ENCODE measurements at regions of chr9 and their contacts with region 1.

Region 1: DNA sequence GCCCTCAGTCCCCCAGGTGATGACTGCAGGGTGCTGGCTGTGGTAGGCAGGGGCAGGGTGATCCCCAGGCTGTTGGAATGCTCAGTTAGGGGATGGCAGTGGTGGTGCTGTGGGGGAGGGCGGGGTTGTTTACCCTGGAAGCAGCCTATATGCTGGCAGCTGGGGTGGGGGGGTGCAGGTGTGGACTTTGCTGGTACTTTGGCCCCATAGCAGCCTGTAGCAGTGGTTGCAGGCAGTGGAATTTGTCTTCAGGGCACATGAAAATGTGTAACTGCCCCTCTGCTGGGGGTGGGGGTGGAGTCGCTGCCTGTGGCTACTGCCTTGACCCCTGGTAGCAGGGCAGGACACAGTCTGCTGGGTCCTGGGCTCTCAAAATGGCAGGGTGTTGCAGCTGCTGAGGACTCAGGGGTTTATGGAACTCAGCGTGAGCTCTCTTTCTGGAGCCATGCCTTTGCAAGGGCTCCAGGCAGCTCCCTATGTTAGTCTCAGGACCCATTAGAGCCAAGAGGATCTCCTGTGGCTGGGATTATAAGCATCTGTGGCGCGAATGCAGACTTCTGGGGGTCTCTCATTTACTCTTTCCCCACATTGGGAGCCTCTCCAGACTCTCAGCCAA is 65.0 kb downstream of the RMI1 start:
- DNase-seq: no peak
- H3K4me3 ChIP-seq: no peak overlapping the region
- H3K27ac ChIP-seq: no peak overlapping the region
- H3K4me1 ChIP-seq: no peaks in the 10 kb centered on the region
- H3K27me3 ChIP-seq: no peaks in the 10 kb centered on the region
- CTCF ChIP-seq: no peak
- POLR2A ChIP-seq: no peak

Region 2: GRCh38 chr9:83688921-83689320 is 356.7 kb before region 1 on chr9:
- intact Hi-C with region 1: no loop called
- DNase-seq: no peak
- H3K4me3 ChIP-seq: no peak overlapping the region
- H3K27ac ChIP-seq: no peak overlapping the region
- H3K4me1 ChIP-seq: no peaks in the 10 kb centered on the region
- H3K27me3 ChIP-seq: no peaks in the 10 kb centered on the region
- CTCF ChIP-seq: no peak
- POLR2A ChIP-seq: no peak

Region 3: DNA sequence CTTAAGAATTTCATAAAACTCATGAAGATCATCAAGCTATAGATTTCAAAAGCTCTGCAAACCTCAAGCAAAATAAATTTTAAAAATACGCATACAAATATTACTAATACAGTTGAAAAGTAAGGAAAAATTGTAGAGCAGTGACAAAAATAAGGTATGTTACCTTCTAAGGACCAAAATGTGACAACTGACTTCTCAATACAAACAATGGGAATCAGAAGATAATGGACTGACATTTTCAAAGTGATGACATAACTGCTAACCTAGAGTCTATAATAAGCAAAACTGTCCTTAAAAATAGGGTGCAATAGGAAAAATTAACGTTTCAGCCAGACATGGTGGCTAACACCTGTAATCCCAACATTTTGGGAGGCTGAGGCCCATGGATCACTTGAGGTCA is 37.9 kb before region 1 on chr9:
- intact Hi-C with region 1: loop called (anchors 5 kb)
- DNase-seq: no peak
- H3K4me3 ChIP-seq: no peak overlapping the region
- H3K27ac ChIP-seq: no peak overlapping the region
- H3K4me1 ChIP-seq: no peaks in the 10 kb centered on the region
- H3K27me3 ChIP-seq: no peaks in the 10 kb centered on the region
- CTCF ChIP-seq: no peak
- POLR2A ChIP-seq: no peak

Region 4: GRCh38 chr9:84111726-84112125 is 66.1 kb after region 1 on chr9:
- intact Hi-C with region 1: no loop called
- DNase-seq: no peak
- H3K4me3 ChIP-seq: no peak overlapping the region
- H3K27ac ChIP-seq: no peak overlapping the region
- H3K4me1 ChIP-seq: no peaks in the 10 kb centered on the region
- H3K27me3 ChIP-seq: no peaks in the 10 kb centered on the region
- CTCF ChIP-seq: no peak
- POLR2A ChIP-seq: no peak

Region 5: DNA sequence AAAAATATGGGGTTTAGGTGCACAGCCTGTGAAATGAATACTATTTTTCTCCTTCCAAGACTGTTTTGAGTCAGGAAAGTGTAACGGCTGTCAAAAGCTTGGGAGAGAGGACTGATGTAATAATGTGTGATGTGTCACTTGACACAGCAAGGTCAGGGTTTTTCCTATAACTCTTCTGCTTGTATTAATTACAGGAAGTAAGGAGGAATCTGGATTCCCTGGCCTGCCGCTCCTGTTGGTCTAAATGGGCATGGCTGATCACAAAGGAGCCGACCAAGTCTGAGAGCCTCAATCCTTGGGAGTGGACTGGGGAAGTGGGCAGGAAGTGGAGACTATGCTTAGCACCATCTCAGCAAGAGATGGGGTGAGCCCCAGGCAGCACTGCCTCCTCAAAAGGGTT is 311.7 kb after region 1 on chr9:
- intact Hi-C with region 1: loop called (anchors 5 kb)
- DNase-seq: no peak
- H3K4me3 ChIP-seq: no peak overlapping the region
- H3K27ac ChIP-seq: no peak overlapping the region
- H3K4me1 ChIP-seq: no peaks in the 10 kb centered on the region
- H3K27me3 ChIP-seq: no peaks in the 10 kb centered on the region
- CTCF ChIP-seq: no peak
- POLR2A ChIP-seq: no peak

Measured in breast epithelium (tissue), 4 donors.